IMR-90 (cell line): ENCODE measurements at regions of chr2 and their contacts with region 1.

Region 1: GRCh38 chr2:65366595-65367125 is 65.7 kb downstream of the SPRED2 start:
- DNase-seq: peak; percentile 98
- ATAC-seq: peak; percentile 68
- H3K4me3 ChIP-seq: no peak overlapping the region
- H3K27ac ChIP-seq: peak overlapping the region; percentile 21; the same call in 1 of the 2 replicates
- H3K4me1 ChIP-seq: peaks cover 21% of the 10 kb centered on the region
- H3K27me3 ChIP-seq: no peaks in the 10 kb centered on the region
- CTCF ChIP-seq: no peak
- POLR2A ChIP-seq: peak; percentile 63; the same call in 1 of the 2 replicates
- RAD21 ChIP-seq: no peak

Region 2: GRCh38 chr2:64876137-64876647 is 490.5 kb before region 1 on chr2:
- CTCF ChIA-PET with region 1: no interaction called
- POLR2A ChIA-PET with region 1: no interaction called
- dilution Hi-C with region 1: no loop called
- in situ Hi-C with region 1: no loop called
- intact Hi-C with region 1: no loop called
- DNase-seq: peak; percentile 71
- ATAC-seq: peak; percentile 69
- H3K4me3 ChIP-seq: no peak overlapping the region
- H3K27ac ChIP-seq: no peak overlapping the region
- H3K4me1 ChIP-seq: peaks cover 5% of the 10 kb centered on the region
- H3K27me3 ChIP-seq: peaks cover 25% of the 10 kb centered on the region
- CTCF ChIP-seq: no peak
- POLR2A ChIP-seq: no peak
- RAD21 ChIP-seq: no peak

Region 3: DNA sequence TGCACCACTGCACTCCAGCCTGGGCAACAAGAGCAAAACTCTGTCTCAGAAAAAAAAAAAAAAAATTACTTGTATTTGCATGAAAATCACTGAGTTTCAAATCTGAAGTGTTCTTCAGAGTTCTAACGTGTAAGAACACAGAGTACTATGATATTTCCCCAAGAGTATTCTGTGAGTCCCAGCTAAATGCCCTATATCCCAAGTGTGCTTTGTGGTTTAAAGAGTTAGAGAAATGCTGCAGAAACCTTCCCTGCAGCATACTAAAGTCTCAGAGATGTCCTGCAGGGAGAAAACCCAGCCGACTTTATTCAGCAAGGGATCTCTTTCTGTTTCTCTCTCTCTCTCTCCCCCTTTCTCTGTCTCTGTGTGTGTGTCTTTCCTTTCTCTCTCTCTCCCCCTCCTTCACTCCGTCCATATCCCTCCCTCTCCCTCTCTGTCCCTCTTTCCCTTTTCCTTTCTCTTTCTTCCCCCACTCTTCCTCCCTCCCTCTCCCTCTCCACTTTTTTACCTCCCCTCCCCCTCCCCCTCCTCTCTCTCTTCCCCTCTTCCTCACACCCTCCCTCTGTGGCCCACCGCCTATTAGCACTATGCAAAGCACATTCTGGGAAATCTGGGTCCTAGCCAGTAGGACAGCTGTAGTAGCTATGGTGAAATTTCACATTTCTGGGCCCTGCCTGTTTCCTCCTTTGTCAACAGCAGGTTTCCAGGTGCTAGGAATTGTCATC is 84.9 kb before region 1 on chr2:
- CTCF ChIA-PET with region 1: no interaction called
- POLR2A ChIA-PET with region 1: no interaction called
- dilution Hi-C with region 1: no loop called
- in situ Hi-C with region 1: no loop called
- intact Hi-C with region 1: loop called (anchors 5 kb)
- DNase-seq: peak; percentile 33
- ATAC-seq: peak; percentile 19; the same call in 1 of the 2 replicates
- H3K4me3 ChIP-seq: no peak overlapping the region
- H3K27ac ChIP-seq: no peak overlapping the region
- H3K4me1 ChIP-seq: peaks cover 7% of the 10 kb centered on the region
- H3K27me3 ChIP-seq: 0 out of 2 replicates have a peak, but pooled peaks cover 2% of the 10 kb centered on the region
- CTCF ChIP-seq: no peak
- POLR2A ChIP-seq: no peak
- RAD21 ChIP-seq: no peak

Region 4: DNA sequence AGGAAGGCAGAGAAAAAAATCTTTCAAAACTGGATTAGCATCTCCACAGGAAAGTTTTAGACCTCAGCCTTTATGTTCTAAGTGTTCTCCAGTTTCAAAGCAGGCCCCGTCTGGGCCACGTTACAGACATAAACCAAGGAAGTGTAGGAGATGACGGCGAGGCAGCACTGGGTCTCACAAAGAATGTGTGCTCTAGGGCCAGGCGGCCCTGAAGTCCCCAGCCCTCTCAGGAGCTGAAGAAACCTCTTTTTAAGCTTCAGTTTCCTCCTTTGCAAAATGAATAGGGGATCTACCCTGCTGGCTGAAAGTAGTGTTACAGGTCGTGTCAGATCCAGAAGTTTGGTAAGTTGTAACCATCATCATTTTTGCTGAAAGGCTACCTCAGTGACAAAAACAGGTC is 16.0 kb before region 1 on chr2:
- CTCF ChIA-PET with region 1: interaction called, 4 read pairs
- POLR2A ChIA-PET with region 1: interaction called, 16 read pairs
- dilution Hi-C with region 1: no loop called
- in situ Hi-C with region 1: no loop called
- intact Hi-C with region 1: no loop called
- DNase-seq: no peak
- ATAC-seq: 0 out of 2 replicates have a peak, but pooled peaks have one; percentile 33
- H3K4me3 ChIP-seq: no peak overlapping the region
- H3K27ac ChIP-seq: no peak overlapping the region
- H3K4me1 ChIP-seq: peaks cover 18% of the 10 kb centered on the region
- H3K27me3 ChIP-seq: no peaks in the 10 kb centered on the region
- CTCF ChIP-seq: peak; percentile 22; the same call in 1 of the 2 replicates
- POLR2A ChIP-seq: no peak
- RAD21 ChIP-seq: no peak

Region 5: DNA sequence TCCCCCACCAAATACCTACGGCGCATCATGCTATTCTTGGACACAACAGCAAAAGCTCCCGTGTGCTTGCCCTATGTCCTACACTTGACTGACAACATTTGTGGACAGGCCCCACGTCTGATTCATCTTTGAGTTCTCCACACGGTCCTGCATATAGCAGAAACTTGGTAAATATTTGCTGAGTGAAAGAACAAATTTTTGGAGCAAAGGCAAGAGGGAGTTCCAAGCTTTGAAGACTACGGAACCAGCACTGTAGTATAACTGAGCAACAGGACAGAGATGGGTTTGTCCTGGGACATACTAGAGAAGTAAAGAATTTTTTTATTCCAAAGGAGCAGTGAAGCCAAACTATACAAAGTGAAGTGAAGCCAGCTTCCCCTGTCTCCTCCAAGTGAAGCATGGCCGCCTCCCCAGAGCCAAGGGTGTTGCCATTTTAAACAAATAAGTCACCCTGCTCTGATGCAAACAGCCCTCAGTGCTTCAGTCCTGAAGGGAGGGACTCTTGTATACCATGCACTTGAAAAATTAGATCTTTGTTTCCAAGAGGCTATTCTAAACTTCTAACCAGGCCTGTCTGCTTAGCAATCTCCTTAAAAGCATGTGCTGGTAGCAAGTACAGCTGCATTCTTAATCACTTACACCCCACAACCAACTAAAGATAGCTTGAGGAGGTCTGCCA is 29.8 kb after region 1 on chr2:
- CTCF ChIA-PET with region 1: no interaction called
- POLR2A ChIA-PET with region 1: no interaction called
- dilution Hi-C with region 1: no loop called
- in situ Hi-C with region 1: no loop called
- intact Hi-C with region 1: loop called (anchors 1 kb)
- DNase-seq: peak; percentile 57
- ATAC-seq: peak; percentile 91
- H3K4me3 ChIP-seq: no peak overlapping the region
- H3K27ac ChIP-seq: no peak overlapping the region
- H3K4me1 ChIP-seq: peaks cover 11% of the 10 kb centered on the region
- H3K27me3 ChIP-seq: no peaks in the 10 kb centered on the region
- CTCF ChIP-seq: no peak
- POLR2A ChIP-seq: no peak
- RAD21 ChIP-seq: no peak

Region 6: GRCh38 chr2:65420712-65421431 is 54.2 kb after region 1 on chr2:
- CTCF ChIA-PET with region 1: no interaction called
- POLR2A ChIA-PET with region 1: no interaction called
- dilution Hi-C with region 1: no loop called
- in situ Hi-C with region 1: no loop called
- intact Hi-C with region 1: loop called (anchors 2 kb)
- DNase-seq: peak; percentile 80
- ATAC-seq: peak; percentile 83
- H3K4me3 ChIP-seq: no peak overlapping the region
- H3K27ac ChIP-seq: peak overlapping the region; percentile 19; the same call in 1 of the 2 replicates
- H3K4me1 ChIP-seq: peaks cover 5% of the 10 kb centered on the region
- H3K27me3 ChIP-seq: no peaks in the 10 kb centered on the region
- CTCF ChIP-seq: no peak
- POLR2A ChIP-seq: no peak
- RAD21 ChIP-seq: no peak

Region 7: GRCh38 chr2:65638443-65638842 is 271.8 kb after region 1 on chr2:
- CTCF ChIA-PET with region 1: no interaction called
- POLR2A ChIA-PET with region 1: no interaction called
- dilution Hi-C with region 1: no loop called
- in situ Hi-C with region 1: no loop called
- intact Hi-C with region 1: no loop called
- DNase-seq: no peak
- ATAC-seq: no peak
- H3K4me3 ChIP-seq: no peak overlapping the region
- H3K27ac ChIP-seq: no peak overlapping the region
- H3K4me1 ChIP-seq: peaks cover 2% of the 10 kb centered on the region
- H3K27me3 ChIP-seq: peaks cover 31% of the 10 kb centered on the region
- CTCF ChIP-seq: no peak
- POLR2A ChIP-seq: no peak
- RAD21 ChIP-seq: no peak

Region 8: DNA sequence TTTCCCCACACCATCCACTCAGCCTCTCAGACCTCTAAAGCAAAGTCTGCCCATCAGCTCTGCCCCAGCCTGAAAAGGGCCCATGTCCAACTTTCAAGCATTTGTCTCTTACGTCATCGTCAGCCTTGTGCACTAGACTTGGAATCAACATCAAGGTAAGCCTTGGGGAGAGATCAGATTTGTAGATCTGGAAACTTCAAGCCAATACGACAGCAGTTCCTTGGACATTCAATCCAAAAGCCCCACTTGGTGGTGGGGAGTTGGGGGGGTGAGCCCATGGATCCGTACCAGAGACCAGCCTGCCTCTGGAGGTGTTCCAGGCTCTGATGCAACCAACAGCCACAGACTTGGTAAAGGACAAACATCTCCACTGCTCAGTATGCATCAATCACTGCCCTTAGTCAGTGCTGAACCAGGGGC is 861.5 kb after region 1 on chr2:
- CTCF ChIA-PET with region 1: no interaction called
- POLR2A ChIA-PET with region 1: no interaction called
- dilution Hi-C with region 1: no loop called
- in situ Hi-C with region 1: no loop called
- intact Hi-C with region 1: no loop called
- DNase-seq: no peak
- ATAC-seq: no peak
- H3K4me3 ChIP-seq: no peak overlapping the region
- H3K27ac ChIP-seq: no peak overlapping the region
- H3K4me1 ChIP-seq: no peaks in the 10 kb centered on the region
- H3K27me3 ChIP-seq: no peaks in the 10 kb centered on the region
- CTCF ChIP-seq: no peak
- POLR2A ChIP-seq: no peak
- RAD21 ChIP-seq: no peak